Endothelial cell of umbilical vein (primary cell): ENCODE measurements at regions of chr1 and their contacts with region 1.

Region 1: DNA sequence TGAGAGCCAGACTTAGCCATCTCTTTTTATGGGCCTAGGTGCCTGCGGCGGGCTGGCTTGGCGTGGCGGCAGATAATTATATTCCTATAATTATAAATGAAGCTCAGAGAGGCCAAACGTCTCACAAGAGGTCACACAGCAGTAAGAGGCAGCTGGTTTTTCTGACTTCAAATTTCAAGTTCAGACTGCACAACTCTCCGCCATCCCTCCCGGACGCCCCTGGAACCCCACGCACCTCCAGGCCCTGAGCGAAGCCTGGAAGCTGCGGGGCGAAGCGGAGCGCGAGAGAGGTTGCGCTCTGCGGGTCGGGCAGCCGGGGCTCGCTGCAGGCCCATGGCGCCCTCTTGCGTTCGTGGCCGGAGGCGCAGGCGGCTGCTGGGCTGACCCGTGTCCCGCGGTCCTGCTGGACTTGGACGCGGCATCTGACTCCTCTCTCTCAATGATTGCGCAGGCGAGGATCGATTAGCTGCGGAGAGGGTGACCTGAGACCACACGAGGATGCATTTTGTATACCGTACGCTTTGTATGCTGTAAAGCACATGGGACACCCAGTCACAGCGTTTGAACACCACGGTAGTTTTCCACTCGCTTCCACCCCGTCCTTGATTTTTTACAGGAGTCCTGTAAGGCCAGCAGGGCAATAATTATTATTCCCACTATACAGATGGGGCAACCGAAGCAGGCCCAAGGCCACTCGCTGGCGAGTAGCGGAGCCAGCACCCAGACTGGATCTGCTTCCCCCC is 272.7 kb downstream of the FOXD2 start:
- DNase-seq: peak; percentile 56
- H3K4me3 ChIP-seq: no peak overlapping the region
- H3K27ac ChIP-seq: no peak overlapping the region
- H3K4me1 ChIP-seq: peaks cover 7% of the 10 kb centered on the region
- H3K27me3 ChIP-seq: peaks cover 59 to 66% of the 10 kb centered on the region in 2 experiments
- CTCF ChIP-seq: peak; percentile 98 to 99
- POLR2A ChIP-seq: no peak

Region 2: GRCh38 chr1:47023302-47024140 is 687.0 kb before region 1 on chr1 and contains the start of gene CYP4X1:
- CTCF ChIA-PET with region 1: no interaction called
- POLR2A ChIA-PET with region 1: no interaction called
- dilution Hi-C with region 1: no loop called
- intact Hi-C with region 1: no loop called
- DNase-seq: peak; percentile 80
- H3K4me3 ChIP-seq: peak within 1 kb of the TSS in 2 of 3 experiments; percentile 23 to 32
- H3K27ac ChIP-seq: no peak within 1 kb of the TSS
- H3K4me1 ChIP-seq: peaks cover 12% of the 10 kb centered on the region
- H3K27me3 ChIP-seq: no peaks in the 10 kb centered on the region
- CTCF ChIP-seq: no peak
- POLR2A ChIP-seq: no peak
- total RNA-seq, gene CYP4X1: 2.3 and 3.7 TPM in 2 replicates

Region 3: DNA sequence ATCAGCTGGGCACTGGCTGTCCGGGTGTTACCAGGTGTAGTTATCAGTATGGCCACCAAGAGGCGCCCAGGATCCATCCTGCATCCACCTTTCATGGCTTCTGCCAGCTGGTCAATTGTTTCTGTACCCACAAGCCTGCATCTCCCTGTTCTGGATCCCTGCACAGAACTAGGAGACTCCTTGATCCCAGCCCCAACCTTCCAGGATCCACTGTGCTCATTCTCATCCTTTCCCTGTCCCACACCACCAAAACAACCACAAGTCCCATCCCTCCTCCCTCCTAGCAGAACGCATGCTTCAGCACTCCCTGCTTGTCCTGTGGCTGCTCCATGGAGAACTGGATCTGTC is 321.6 kb before region 1 on chr1:
- CTCF ChIA-PET with region 1: interaction called, 14 read pairs
- POLR2A ChIA-PET with region 1: no interaction called
- dilution Hi-C with region 1: no loop called
- intact Hi-C with region 1: loop called (anchors 1 kb)
- DNase-seq: peak; percentile 68
- H3K4me3 ChIP-seq: no peak overlapping the region
- H3K27ac ChIP-seq: no peak overlapping the region
- H3K4me1 ChIP-seq: no peaks in the 10 kb centered on the region
- H3K27me3 ChIP-seq: peaks cover 0 to 2% of the 10 kb centered on the region in 2 experiments
- CTCF ChIP-seq: peak; percentile 66 to 84
- POLR2A ChIP-seq: no peak

Region 4: DNA sequence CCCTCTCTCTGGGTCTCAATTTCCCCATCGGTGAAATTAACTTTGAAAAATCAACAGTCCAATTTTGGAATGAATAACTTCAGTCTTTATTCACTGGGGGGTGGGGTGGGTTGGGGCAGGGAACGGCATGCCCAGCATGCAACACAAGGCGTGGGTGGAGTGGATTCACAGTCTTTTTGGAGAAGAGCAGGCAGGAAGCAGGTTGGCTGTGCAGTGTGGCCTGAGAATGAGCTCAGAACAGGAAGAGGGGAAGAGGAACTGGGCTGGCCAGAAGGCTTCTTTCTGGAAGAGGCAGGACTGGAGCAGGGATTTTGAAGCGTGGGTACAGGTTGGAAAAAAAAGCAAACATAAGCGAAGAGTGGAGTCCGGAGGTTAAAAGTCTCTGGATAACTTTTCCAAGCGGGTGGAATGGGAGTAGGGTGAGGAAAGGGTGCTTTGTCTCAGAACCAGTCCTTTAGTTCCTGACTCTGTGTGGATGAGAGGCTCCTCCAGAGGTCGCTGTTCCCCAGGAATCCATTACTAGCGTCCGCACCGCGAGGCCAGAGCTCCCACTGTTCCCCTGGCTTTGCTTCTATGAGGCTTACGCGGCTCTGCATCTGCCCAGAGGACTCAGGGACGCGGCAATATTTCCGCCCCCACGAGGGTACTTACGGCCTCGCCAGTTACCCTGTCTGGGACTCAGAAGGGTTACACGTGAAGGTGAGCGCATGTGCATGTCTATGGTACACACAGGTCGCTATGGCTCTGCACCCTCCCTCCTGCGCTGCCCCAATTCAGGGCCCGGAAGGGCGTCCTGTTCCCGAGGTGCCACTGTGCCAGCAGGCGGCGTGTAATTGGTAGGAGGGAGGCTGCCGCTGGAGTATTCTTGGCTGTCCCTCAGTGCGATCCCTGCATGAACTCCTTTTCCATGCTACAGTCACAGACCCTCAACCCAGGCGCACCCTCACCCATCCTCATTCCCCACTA is 278.1 kb before region 1 on chr1:
- CTCF ChIA-PET with region 1: interaction called, 416 read pairs
- POLR2A ChIA-PET with region 1: no interaction called
- dilution Hi-C with region 1: no loop called
- intact Hi-C with region 1: loop called (anchors 1 kb)
- DNase-seq: peak; percentile 80
- H3K4me3 ChIP-seq: no peak overlapping the region
- H3K27ac ChIP-seq: no peak overlapping the region
- H3K4me1 ChIP-seq: peaks cover 24% of the 10 kb centered on the region
- H3K27me3 ChIP-seq: peaks cover 10 to 18% of the 10 kb centered on the region in 2 experiments
- CTCF ChIP-seq: peak; percentile 80 to 83
- POLR2A ChIP-seq: no peak

Region 5: GRCh38 chr1:47449822-47450552 is 260.5 kb before region 1 on chr1:
- CTCF ChIA-PET with region 1: interaction called, 35 read pairs
- POLR2A ChIA-PET with region 1: no interaction called
- dilution Hi-C with region 1: no loop called
- intact Hi-C with region 1: loop called (anchors 1 kb)
- DNase-seq: no peak
- H3K4me3 ChIP-seq: no peak overlapping the region
- H3K27ac ChIP-seq: no peak overlapping the region
- H3K4me1 ChIP-seq: no peaks in the 10 kb centered on the region
- H3K27me3 ChIP-seq: peaks cover 62 to 66% of the 10 kb centered on the region in 2 experiments
- CTCF ChIP-seq: peak; percentile 41 to 69
- POLR2A ChIP-seq: no peak

Region 6: GRCh38 chr1:47527658-47528255 is 182.7 kb before region 1 on chr1:
- CTCF ChIA-PET with region 1: interaction called, 79 read pairs
- POLR2A ChIA-PET with region 1: no interaction called
- dilution Hi-C with region 1: no loop called
- intact Hi-C with region 1: loop called (anchors 1 kb)
- DNase-seq: peak; percentile 28
- H3K4me3 ChIP-seq: no peak overlapping the region
- H3K27ac ChIP-seq: no peak overlapping the region
- H3K4me1 ChIP-seq: no peaks in the 10 kb centered on the region
- H3K27me3 ChIP-seq: peaks cover 11 to 20% of the 10 kb centered on the region in 2 experiments
- CTCF ChIP-seq: peak; percentile 38 to 61
- POLR2A ChIP-seq: no peak

Region 7: DNA sequence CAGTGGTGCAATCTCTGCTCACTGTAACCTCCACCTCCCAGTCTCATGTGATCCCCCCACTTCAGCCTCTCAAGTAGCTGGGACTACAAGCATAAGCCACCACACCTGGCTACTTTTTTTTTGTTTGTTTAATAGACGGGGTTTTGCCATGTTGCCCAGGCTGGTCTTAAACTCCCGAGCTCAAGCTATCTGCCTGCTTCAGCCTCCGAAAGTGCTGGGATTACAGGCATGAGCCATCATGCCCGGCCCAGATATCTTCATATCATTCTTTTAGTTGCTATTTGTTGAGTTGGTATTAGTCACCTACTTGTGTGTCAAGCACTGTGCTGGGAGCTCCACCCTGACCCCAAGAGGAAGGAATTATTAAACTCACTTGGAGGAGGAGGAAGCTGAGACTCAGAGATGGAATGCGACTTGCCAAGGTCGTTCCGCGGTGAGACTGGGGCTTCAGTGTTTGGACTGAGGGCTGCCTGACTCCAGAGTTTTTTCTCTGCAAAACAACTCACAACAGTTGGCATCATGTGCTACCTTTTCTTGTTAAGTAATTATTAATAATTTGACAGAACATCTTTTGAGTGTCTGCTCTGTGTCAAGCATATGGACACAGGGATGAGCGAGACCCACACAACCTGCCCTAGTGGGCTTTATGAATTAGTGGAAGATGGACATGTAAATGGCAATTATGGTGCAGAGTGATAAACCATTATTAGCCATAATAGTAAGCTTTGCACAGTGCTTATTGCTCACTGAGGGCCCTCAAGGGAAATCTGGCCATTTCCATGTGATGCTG is 140.6 kb before region 1 on chr1:
- CTCF ChIA-PET with region 1: interaction called, 3 read pairs
- POLR2A ChIA-PET with region 1: no interaction called
- dilution Hi-C with region 1: no loop called
- intact Hi-C with region 1: loop called (anchors 5 kb)
- DNase-seq: peak; percentile 93
- H3K4me3 ChIP-seq: no peak overlapping the region
- H3K27ac ChIP-seq: peak overlapping the region; percentile 23
- H3K4me1 ChIP-seq: peaks cover 25% of the 10 kb centered on the region
- H3K27me3 ChIP-seq: no peaks in the 10 kb centered on the region
- CTCF ChIP-seq: peak; percentile 28 to 35
- POLR2A ChIP-seq: no peak

Region 8: DNA sequence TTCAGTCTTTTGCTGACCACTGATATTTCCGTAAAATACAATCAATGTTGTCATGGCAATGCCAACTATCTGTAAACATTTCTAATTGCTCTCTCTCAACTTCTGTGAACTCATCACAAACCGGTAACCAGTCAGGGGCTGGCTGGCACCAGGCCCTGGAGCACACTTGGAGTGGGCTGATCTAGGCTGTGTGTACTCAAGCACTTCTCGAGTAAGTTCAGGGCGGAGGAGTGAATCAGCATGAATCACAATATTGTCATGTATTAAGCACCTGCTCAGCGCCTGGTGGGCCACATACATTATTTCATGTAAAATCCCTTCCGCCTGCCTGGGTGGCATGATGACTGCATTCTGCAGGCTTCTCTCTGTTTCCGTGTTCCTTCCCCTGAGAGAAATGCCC is 60.3 kb before region 1 on chr1:
- CTCF ChIA-PET with region 1: interaction called, 5 read pairs
- POLR2A ChIA-PET with region 1: no interaction called
- dilution Hi-C with region 1: no loop called
- intact Hi-C with region 1: loop called (anchors 1 kb)
- DNase-seq: peak; percentile 96
- H3K4me3 ChIP-seq: no peak overlapping the region
- H3K27ac ChIP-seq: peak overlapping the region; percentile 74
- H3K4me1 ChIP-seq: peaks cover 11% of the 10 kb centered on the region
- H3K27me3 ChIP-seq: no peaks in the 10 kb centered on the region
- CTCF ChIP-seq: no peak
- POLR2A ChIP-seq: no peak